ENCODE measurements at regions of chr2 and their contacts with region 1.

Region 1: DNA sequence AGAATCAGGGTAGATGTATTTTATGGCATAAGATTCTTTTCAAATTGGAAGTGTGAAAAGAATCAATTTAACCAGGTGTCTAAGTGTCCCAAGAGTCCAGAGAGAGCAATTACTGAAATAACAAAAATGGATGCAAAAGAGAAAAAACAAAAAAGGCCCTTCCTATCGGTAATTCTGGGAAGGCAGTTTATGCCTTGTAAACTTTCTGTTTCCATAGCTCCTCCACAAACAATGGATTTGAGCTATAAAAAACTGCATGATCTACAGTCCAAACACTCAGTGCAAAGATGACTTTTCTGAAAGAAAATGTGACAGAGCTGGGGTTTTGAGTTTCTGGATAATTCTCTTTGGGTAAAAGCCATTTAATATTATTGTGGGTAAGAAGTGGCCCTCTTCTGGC is 366.1 kb downstream of the EN1 start:
- DNase-seq: no peak
- ATAC-seq: no peak
- H3K4me3 Mint-ChIP-seq: no peak overlapping the region
- H3K27ac Mint-ChIP-seq: no peak overlapping the region
- H3K4me1 Mint-ChIP-seq: peaks cover 30% of the 10 kb centered on the region
- H3K27me3 Mint-ChIP-seq: no peaks in the 10 kb centered on the region
- CTCF ChIP-seq: no peak

Region 2: GRCh38 chr2:118492335-118492734 is 11.0 kb after region 1 on chr2:
- CTCF ChIA-PET with region 1: interaction called, 10 read pairs
- POLR2A ChIA-PET with region 1: no interaction called
- DNase-seq: no peak
- ATAC-seq: no peak
- H3K4me3 Mint-ChIP-seq: no peak overlapping the region
- H3K27ac Mint-ChIP-seq: no peak overlapping the region
- H3K4me1 Mint-ChIP-seq: peaks cover 55% of the 10 kb centered on the region
- H3K27me3 Mint-ChIP-seq: peaks cover 6% of the 10 kb centered on the region; the same call in 1 of the 2 replicates
- CTCF ChIP-seq: peak; percentile 42; the same call in 1 of the 2 replicates

Region 3: GRCh38 chr2:118672571-118673158 is 191.4 kb after region 1 on chr2:
- CTCF ChIA-PET with region 1: no interaction called
- POLR2A ChIA-PET with region 1: no interaction called
- DNase-seq: no peak
- ATAC-seq: no peak
- H3K4me3 Mint-ChIP-seq: no peak overlapping the region
- H3K27ac Mint-ChIP-seq: no peak overlapping the region
- H3K4me1 Mint-ChIP-seq: no peaks in the 10 kb centered on the region
- H3K27me3 Mint-ChIP-seq: no peaks in the 10 kb centered on the region; the same call in 1 of the 2 replicates
- CTCF ChIP-seq: no peak